ENCODE measurements at regions of chr12 and their contacts with region 1.

Region 1: DNA sequence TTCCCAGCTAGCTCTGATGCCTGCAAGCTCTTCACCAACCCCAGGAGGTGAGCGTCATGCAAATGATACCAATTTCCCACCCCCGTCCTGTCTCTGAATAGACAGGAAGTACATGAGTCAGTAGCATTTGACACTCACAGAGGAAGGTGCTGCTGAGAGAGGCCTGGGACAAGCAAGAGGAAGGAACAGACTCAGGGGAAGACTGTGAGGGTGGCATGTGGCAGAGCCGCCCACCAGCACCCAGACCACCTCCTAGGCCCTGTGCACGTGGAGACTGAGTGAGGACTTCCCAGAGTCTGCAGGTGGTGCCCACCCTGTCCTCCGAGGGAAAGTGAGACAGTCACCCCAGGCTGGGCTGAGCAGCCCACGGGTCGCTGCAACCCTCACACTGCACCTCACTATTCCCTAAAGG is 199.5 kb upstream of the SFSWAP start:
- DNase-seq: peak; percentile 78
- ATAC-seq: peak; percentile 100
- H3K4me3 Mint-ChIP-seq: no peak overlapping the region
- H3K27ac Mint-ChIP-seq: peak overlapping the region; percentile 37
- H3K4me1 Mint-ChIP-seq: peaks cover 15% of the 10 kb centered on the region
- H3K27me3 Mint-ChIP-seq: peaks cover 3% of the 10 kb centered on the region

Region 2: GRCh38 chr12:131525795-131526508 is 14.6 kb after region 1 on chr12:
- CTCF ChIA-PET with region 1: no interaction called
- POLR2A ChIA-PET with region 1: no interaction called
- intact Hi-C with region 1: no loop called
- DNase-seq: no peak
- ATAC-seq: no peak
- H3K4me3 Mint-ChIP-seq: no peak overlapping the region
- H3K27ac Mint-ChIP-seq: no peak overlapping the region
- H3K4me1 Mint-ChIP-seq: peaks cover 4% of the 10 kb centered on the region
- H3K27me3 Mint-ChIP-seq: peaks cover 2% of the 10 kb centered on the region

Region 3: GRCh38 chr12:131536337-131536736 is 24.9 kb after region 1 on chr12:
- CTCF ChIA-PET with region 1: no interaction called
- POLR2A ChIA-PET with region 1: no interaction called
- intact Hi-C with region 1: loop called in 1 of 2 experiments (anchors 1 kb)
- DNase-seq: peak; percentile 61
- ATAC-seq: peak; percentile 80
- H3K4me3 Mint-ChIP-seq: no peak overlapping the region
- H3K27ac Mint-ChIP-seq: peak overlapping the region; percentile 6
- H3K4me1 Mint-ChIP-seq: peaks cover 14% of the 10 kb centered on the region
- H3K27me3 Mint-ChIP-seq: peaks cover 3% of the 10 kb centered on the region

Measured in activated CD4-positive, alpha-beta T cell treated with anti-CD3 and anti-CD28 coated beads for 36 hours (primary cell).